ENCODE measurements at regions of chr5 and their contacts with region 1.

Region 1: GRCh38 chr5:96336351-96336985 is 96.6 kb downstream of the PCSK1 start:
- DNase-seq: peak in 3 of 6 donors; percentile 69 to 82 (median 74)
- ATAC-seq: peak; percentile 51 to 80 (median 74)
- H3K4me3 ChIP-seq: no peak overlapping the region
- H3K27ac ChIP-seq: peak overlapping the region in 2 of 4 donors; percentile 53 to 63
- H3K4me1 ChIP-seq: peaks cover 36 to 46% (median 39%) of the 10 kb centered on the region in 3 donors
- H3K27me3 ChIP-seq: no peaks in the 10 kb centered on the region
- CTCF ChIP-seq: peak; percentile 64 to 85 (median 82)

Region 2: GRCh38 chr5:95861221-95861857 is 475.1 kb before region 1 on chr5:
- intact Hi-C with region 1: loop called in 2 of 3 experiments (anchors 10 kb)
- DNase-seq: peak in 2 of 6 donors; percentile 43 to 66
- ATAC-seq: peak in 3 of 4 donors; percentile 3 to 50 (median 39)
- H3K4me3 ChIP-seq: no peak overlapping the region
- H3K27ac ChIP-seq: peak overlapping the region in 2 of 4 donors; percentile 55 to 81
- H3K4me1 ChIP-seq: peaks cover 26 to 55% (median 30%) of the 10 kb centered on the region in 3 donors
- H3K27me3 ChIP-seq: no peaks in the 10 kb centered on the region
- CTCF ChIP-seq: no peak

Region 3: GRCh38 chr5:95961617-95962474 is 374.6 kb before region 1 on chr5 and contains the start of gene ELL2:
- intact Hi-C with region 1: loop called in 2 of 3 experiments (anchors 10 kb)
- DNase-seq: peak; percentile 99 to 100 (median 99)
- ATAC-seq: peak; percentile 79 to 85 (median 81)
- H3K4me3 ChIP-seq: peak within 1 kb of the TSS; percentile 65 to 97 (median 88)
- H3K27ac ChIP-seq: peak within 1 kb of the TSS; percentile 99 to 100 (median 100)
- H3K4me1 ChIP-seq: peaks cover 23 to 39% (median 23%) of the 10 kb centered on the region in 3 donors
- H3K27me3 ChIP-seq: no peaks in the 10 kb centered on the region
- CTCF ChIP-seq: no peak
- total RNA-seq, gene ELL2: 72.7 to 92.8 (median 82.4) TPM

Region 4: DNA sequence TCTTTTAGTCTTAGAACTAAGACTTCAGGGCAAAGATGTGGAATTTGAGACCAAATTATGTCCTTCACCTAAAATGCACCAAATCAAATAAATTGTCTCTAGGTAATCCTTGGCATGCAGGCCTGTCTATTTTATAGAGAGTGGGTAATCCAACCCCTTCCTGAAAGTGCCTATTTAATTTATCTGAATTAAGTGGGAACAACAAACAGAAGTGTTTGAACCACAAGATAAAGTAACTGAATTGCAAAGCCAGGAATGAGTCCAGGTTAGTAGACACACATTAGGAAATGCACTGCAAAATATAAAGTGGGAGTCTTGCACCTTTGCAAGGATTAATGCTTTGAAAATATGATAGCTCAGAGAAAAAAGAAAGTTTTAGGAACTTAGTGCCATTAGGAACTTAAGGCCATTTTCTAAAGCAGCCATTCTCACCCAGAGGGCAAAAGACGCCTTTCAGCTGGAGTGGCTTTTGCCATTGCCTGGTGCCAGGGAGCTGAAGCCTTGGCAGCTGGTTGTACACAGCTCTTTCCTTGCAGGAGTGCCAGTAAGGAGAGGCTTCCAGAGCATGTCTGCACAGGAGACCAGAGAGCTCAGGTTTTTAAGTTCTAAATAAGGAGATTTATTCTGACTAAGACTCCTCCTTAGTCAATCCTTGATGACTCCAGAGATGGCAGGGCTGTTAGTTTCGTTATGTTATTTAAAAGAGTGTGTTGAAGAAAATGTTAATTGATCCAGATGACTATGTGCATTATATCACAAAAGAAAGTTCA is 223.1 kb before region 1 on chr5:
- intact Hi-C with region 1: loop called in 1 of 3 experiments (anchors 10 kb)
- DNase-seq: peak; percentile 48 to 79 (median 61)
- ATAC-seq: peak; percentile 86 to 95 (median 90)
- H3K4me3 ChIP-seq: no peak overlapping the region
- H3K27ac ChIP-seq: peak overlapping the region in 3 of 4 donors; percentile 39 to 54 (median 50)
- H3K4me1 ChIP-seq: peaks cover 41 to 74% (median 51%) of the 10 kb centered on the region in 3 donors
- H3K27me3 ChIP-seq: no peaks in the 10 kb centered on the region
- CTCF ChIP-seq: no peak

Region 5: GRCh38 chr5:96260009-96260408 is 76.5 kb before region 1 on chr5:
- intact Hi-C with region 1: loop called in 1 of 3 experiments (anchors 10 kb)
- DNase-seq: no peak
- ATAC-seq: no peak
- H3K4me3 ChIP-seq: no peak overlapping the region
- H3K27ac ChIP-seq: no peak overlapping the region
- H3K4me1 ChIP-seq: peaks cover 8 to 24% (median 14%) of the 10 kb centered on the region in 3 donors
- H3K27me3 ChIP-seq: no peaks in the 10 kb centered on the region
- CTCF ChIP-seq: no peak